AG04449 (cell line): ENCODE measurements at regions of chr15 and their contacts with region 1.

Region 1: GRCh38 chr15:99704444-99704838 is 28.8 kb downstream of the LYSMD4 start:
- DNase-seq: no peak
- H3K4me3 ChIP-seq: no peak overlapping the region
- CTCF ChIP-seq: peak; percentile 60

Region 2: GRCh38 chr15:99275525-99276128 is 428.8 kb before region 1 on chr15:
- CTCF ChIA-PET with region 1: interaction called, 335 read pairs
- POLR2A ChIA-PET with region 1: interaction called, 3 read pairs
- DNase-seq: no peak
- H3K4me3 ChIP-seq: no peak overlapping the region
- CTCF ChIP-seq: no peak

Region 3: DNA sequence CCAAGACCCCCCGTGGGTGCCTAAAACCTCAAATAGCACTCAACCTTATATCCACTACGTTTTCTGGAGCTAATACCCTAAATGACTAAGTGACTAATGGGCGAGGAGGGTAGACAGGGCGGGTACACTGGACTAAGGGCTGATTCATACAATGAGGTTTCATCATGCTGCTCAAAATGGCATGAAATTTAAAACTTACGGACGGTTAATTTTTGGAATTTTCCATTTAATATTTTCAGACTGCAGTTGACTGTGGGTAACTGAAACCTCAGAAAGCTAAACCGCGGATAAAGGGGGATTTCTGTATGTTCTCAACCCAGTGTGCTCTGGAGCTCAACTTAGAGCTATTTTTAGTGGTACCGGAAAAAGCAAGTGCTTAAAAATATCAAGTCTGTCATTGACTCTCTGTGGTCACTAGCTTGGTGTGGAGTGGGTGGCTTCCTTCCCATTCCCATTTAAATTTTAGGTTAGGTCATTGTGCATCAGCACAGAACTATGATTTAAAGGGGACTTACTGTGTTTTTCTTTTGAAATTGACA is 380.3 kb before region 1 on chr15:
- CTCF ChIA-PET with region 1: interaction called, 12 read pairs
- POLR2A ChIA-PET with region 1: interaction called, 3 read pairs
- DNase-seq: peak; percentile 67
- H3K4me3 ChIP-seq: peak overlapping the region; percentile 18
- CTCF ChIP-seq: no peak

Region 4: DNA sequence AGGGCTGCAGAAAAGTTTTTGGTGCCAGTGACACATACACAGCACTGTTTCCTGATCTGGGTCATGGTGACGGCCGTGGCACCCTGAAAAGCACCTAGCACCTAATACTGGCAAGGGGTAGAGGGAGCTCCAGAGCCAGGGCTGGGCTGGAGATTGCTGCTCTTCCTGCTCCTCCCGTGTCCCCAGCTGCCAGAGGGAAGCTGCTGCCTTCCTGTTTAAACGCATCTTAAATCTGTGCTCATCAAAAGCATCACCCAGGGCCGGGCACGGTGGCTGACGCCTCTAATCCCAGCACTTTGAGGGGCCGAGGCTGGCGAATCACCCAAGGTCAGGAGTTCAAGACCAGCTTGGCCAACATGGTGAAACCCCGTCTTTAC is 295.4 kb before region 1 on chr15:
- CTCF ChIA-PET with region 1: interaction called, 63 read pairs
- POLR2A ChIA-PET with region 1: interaction called, 3 read pairs
- DNase-seq: no peak
- H3K4me3 ChIP-seq: no peak overlapping the region
- CTCF ChIP-seq: peak; percentile 80

Region 5: GRCh38 chr15:99507504-99508310 is 196.7 kb before region 1 on chr15:
- CTCF ChIA-PET with region 1: interaction called, 11 read pairs
- POLR2A ChIA-PET with region 1: no interaction called
- DNase-seq: peak; percentile 21
- H3K4me3 ChIP-seq: no peak overlapping the region
- CTCF ChIP-seq: no peak

Region 6: GRCh38 chr15:99682455-99682854 is 22.0 kb before region 1 on chr15:
- CTCF ChIA-PET with region 1: interaction called, 24 read pairs
- POLR2A ChIA-PET with region 1: no interaction called
- DNase-seq: peak; percentile 57
- H3K4me3 ChIP-seq: no peak overlapping the region
- CTCF ChIP-seq: no peak

Region 7: DNA sequence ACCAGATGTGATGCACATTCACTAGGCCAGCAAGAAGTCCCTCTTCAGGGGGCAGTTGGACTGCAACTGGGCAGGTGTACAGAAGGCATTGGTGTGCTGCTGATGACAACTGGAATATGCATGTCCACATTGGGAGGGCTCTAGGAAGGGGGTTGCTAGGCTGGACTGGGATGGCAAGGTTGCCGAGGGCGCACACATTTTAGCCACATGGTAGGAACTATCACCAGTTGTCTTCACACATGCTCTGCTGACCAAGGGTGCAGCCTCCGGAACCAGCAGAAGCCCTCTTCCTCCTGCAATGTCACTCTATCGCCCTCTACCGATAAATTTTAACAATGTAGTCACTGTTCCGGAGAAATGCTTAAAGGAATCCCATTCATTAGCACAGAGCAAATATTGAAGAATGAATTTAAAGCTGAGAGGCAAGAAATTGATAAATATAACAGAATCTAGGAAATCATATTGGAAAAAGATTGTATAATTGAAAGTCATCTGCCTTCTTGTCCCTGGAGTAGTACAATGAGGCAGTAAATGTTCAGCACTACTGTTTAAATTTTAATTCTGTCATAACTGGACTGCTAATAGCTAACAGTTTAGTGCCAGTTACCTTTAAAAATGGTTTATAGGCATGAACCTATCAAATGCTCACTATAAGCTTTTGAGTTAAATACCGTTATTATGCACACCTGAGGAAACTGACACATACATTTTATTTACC is 51.4 kb after region 1 on chr15:
- CTCF ChIA-PET with region 1: interaction called, 42 read pairs
- POLR2A ChIA-PET with region 1: no interaction called
- DNase-seq: peak; percentile 12
- H3K4me3 ChIP-seq: no peak overlapping the region
- CTCF ChIP-seq: peak; percentile 69